ENCODE measurements at regions of chr2 and their contacts with region 1.

Region 1: DNA sequence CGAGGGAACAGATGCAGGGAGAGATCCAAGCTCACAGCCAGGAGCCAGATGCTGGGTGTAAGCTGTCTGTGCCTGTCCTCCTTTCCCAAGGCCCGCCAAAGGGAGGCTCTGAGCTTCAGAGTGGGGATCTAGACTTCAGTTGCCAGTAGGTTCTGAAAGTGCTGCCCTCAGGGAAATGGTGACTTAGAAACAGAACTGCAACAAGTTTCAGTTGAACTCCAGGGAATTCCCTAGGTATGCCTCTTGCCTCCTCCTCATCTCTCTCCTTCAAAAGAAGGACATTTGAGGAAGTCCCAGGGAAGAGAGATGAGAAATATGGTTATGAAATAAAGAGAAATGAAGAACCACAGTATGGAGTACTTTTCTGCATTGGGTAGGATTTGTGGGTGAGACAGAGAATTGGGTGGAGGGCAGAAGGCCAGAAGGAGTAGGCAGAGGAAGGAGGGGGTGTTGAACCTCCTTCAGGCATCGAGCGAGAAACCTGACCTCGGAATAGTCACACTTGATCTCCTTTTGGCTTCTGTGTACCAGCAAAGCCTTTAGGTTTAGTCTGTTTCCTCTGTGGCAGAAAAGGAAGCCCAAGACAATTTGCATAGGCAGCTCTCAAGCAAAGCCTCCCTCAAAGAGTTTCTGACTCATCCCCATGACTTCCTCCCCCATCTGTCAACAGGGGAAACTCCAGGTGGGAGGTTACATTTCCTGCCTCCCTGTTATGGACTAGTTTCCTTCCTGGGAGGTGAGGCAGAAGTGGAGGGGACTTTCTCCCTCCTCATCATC is 45.7 kb downstream of the QPCT start:
- DNase-seq: peak; percentile 81
- H3K4me3 Mint-ChIP-seq: peak overlapping the region; percentile 4
- H3K27ac Mint-ChIP-seq: peak overlapping the region; percentile 76
- H3K4me1 Mint-ChIP-seq: peaks cover 13% of the 10 kb centered on the region
- H3K27me3 Mint-ChIP-seq: no peaks in the 10 kb centered on the region

Region 2: DNA sequence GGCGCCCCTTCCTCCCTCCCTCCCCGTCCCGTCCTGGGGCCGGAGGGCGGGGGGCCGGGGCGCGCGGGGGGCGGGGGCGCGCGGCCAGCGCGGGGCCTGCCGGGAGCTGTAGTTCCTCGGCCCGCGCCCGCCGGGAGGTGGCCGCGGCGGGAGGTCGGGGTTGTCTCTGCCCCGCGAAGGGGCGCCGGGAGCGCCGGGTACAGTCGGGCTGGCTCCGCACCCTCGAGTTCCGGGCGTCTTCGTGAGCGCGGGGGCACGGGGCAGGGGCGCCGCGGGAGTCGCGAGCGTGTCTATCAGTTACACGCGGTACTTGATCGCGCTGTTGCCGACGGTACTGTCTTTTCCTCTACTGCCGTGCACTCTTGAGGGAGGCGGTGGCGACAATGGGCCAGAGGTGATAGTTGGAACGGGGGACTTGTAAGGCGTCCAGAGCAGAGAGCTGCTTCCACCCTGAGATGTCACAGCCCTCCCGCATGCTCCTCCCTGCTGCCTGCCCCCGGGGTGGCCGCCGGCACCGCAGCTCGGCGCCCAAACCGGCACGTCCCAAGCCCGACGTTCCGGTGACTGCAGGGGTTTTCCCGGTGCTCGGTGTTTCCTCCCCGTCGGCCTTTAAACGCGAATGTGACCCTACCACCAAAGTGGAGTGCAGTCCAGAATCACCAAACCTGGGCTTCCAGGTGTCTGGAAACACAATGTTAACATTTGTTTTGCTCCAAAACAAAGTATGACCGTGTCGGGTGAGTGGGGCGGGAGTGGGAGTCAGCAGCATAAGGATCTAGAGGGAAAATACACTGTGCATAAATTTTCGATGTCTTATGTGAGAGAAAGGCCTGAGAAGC is 65.2 kb before region 1 on chr2 and contains the start of gene PRKD3:
- CTCF ChIA-PET with region 1: interaction called, 3 read pairs
- POLR2A ChIA-PET with region 1: interaction called, 9 read pairs
- intact Hi-C with region 1: loop called (anchors 1 kb)
- DNase-seq: peak; percentile 77
- H3K4me3 Mint-ChIP-seq: peak within 1 kb of the TSS; percentile 94
- H3K27ac Mint-ChIP-seq: peak within 1 kb of the TSS; percentile 89
- H3K4me1 Mint-ChIP-seq: peaks cover 37% of the 10 kb centered on the region
- H3K27me3 Mint-ChIP-seq: peaks cover 16% of the 10 kb centered on the region
- total RNA-seq, gene PRKD3: 22.5 to 24.7 TPM

Region 3: GRCh38 chr2:37414470-37414949 is 24.3 kb after region 1 on chr2:
- CTCF ChIA-PET with region 1: interaction called, 43 read pairs
- POLR2A ChIA-PET with region 1: no interaction called
- intact Hi-C with region 1: no loop called
- DNase-seq: no peak
- H3K4me3 Mint-ChIP-seq: no peak overlapping the region
- H3K27ac Mint-ChIP-seq: no peak overlapping the region
- H3K4me1 Mint-ChIP-seq: peaks cover 6% of the 10 kb centered on the region
- H3K27me3 Mint-ChIP-seq: no peaks in the 10 kb centered on the region

Region 4: GRCh38 chr2:37585982-37586621 is 195.9 kb after region 1 on chr2:
- CTCF ChIA-PET with region 1: interaction called, 9 read pairs
- POLR2A ChIA-PET with region 1: no interaction called
- intact Hi-C with region 1: loop called (anchors 1 kb)
- DNase-seq: peak; percentile 85
- H3K4me3 Mint-ChIP-seq: peak overlapping the region; percentile 56
- H3K27ac Mint-ChIP-seq: peak overlapping the region; percentile 92
- H3K4me1 Mint-ChIP-seq: peaks cover 91% of the 10 kb centered on the region
- H3K27me3 Mint-ChIP-seq: no peaks in the 10 kb centered on the region

Region 5: DNA sequence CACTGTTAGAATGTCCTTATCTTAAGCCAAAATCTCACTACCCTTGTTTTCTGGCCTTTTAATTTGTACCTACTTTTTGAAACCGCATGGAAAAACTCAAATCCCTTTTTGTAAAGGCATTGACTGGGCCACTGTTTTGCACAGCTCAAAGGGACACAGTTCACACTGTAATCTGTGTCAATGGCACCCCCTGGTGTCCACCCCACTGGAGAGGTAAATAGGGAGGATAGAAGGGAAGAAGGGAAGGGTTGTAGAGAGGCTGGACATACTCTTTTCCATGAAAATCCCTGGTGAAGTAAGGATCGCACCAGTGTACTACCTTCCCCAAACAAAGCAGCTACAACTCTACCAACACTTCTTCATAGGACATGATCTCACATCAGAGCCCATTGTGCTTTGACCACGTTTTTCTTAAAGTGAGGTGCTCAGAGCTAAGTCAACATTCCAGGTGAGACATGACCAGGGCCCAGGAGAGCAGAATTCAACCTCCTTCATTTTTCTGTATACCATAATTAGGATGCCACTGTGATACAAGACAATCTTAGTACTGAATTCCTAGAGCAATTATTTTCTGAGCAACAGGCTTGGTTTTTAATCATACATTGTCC is 442.5 kb after region 1 on chr2:
- CTCF ChIA-PET with region 1: interaction called, 104 read pairs
- POLR2A ChIA-PET with region 1: no interaction called
- intact Hi-C with region 1: no loop called
- DNase-seq: peak; percentile 86
- H3K4me3 Mint-ChIP-seq: no peak overlapping the region
- H3K27ac Mint-ChIP-seq: no peak overlapping the region
- H3K4me1 Mint-ChIP-seq: peaks cover 30% of the 10 kb centered on the region
- H3K27me3 Mint-ChIP-seq: no peaks in the 10 kb centered on the region

Region 6: DNA sequence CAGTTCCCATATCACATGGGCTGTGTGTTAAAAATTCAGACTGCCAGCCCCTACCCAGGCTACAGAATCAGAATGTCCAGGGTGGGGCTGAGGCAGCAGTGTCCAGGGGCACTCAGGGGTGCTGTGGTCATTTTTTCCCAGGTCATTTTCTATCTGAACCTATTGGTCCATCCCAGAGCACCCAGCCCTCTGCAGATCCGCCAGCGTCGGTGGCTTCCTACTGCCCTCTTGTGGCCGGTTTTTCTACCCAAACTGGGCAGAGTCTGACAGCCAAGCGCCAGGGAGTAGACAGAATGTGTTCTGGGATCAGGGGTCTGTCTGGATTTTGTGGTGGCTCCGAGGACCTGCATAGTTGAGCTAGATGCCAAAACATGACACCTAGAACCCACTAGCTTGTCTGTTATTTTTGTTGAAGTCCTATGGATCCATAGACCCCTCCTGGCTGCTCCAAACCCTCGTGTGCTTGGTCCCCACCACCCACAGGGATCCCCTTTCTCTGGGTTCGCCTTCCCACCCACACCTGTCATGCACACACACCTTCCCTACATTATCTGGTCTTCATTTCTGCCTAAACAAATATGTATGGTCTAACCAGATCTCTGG is 500.8 kb after region 1 on chr2:
- CTCF ChIA-PET with region 1: interaction called, 32 read pairs
- POLR2A ChIA-PET with region 1: interaction called, 5 read pairs
- intact Hi-C with region 1: loop called (anchors 5 kb)
- DNase-seq: peak; percentile 76
- H3K4me3 Mint-ChIP-seq: no peak overlapping the region
- H3K27ac Mint-ChIP-seq: no peak overlapping the region
- H3K4me1 Mint-ChIP-seq: peaks cover 49% of the 10 kb centered on the region
- H3K27me3 Mint-ChIP-seq: peaks cover 6% of the 10 kb centered on the region

Region 7: GRCh38 chr2:38274286-38275276 is 884.4 kb after region 1 on chr2:
- CTCF ChIA-PET with region 1: interaction called, 13 read pairs
- POLR2A ChIA-PET with region 1: no interaction called
- intact Hi-C with region 1: loop called (anchors 10 kb)
- DNase-seq: peak; percentile 22
- H3K4me3 Mint-ChIP-seq: no peak overlapping the region
- H3K27ac Mint-ChIP-seq: no peak overlapping the region
- H3K4me1 Mint-ChIP-seq: peaks cover 4% of the 10 kb centered on the region
- H3K27me3 Mint-ChIP-seq: peaks cover 1% of the 10 kb centered on the region

Measured in activated CD4-positive, alpha-beta memory T cell treated with anti-CD3 and anti-CD28 coated beads for 36 hours (primary cell).